Thyroid gland (tissue), 4 donors: ENCODE measurements at regions of chr7 and their contacts with region 1.

Region 1: DNA sequence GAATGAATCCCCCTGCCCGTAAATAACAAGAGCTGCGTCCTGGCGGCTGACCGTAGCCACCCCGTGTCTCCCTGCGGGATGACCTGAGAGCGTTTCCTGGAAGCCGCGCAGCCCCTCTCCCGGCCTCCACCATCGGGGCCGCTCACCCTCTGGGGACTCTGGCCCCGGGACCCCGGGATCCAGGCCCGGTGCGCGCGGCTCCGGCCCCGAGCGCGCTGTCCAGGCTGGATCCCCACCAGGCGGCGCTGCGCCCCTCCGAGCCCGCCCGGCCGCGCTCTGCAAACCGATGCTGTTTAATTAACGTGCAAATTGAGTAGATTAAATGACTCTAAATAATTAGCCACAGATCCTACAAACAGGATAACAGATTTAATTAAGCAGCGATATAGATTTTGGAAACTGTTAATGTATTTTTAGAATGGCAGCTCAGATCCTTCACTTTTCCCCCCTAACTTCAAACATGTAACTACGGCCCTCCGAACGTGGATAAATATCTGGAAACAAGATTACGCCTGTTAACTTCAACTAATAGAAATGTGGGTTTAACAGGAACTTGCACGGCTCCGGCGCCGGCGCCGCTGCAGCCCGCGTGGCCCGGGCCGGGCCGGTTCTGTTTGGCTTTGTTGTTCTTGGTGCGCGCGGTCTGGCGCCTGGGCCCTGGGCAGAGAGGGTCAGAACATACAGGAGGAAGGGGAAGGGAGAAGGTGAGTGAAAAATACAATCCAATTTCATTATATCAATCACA is 7.1 kb upstream of the UNCX start:
- DNase-seq: peak; percentile 11 to 15
- H3K4me3 ChIP-seq: no peak overlapping the region
- H3K27ac ChIP-seq: no peak overlapping the region
- H3K4me1 ChIP-seq: peaks cover 0 to 6% of the 10 kb centered on the region in 2 donors
- H3K27me3 ChIP-seq: peaks cover 67% of the 10 kb centered on the region
- CTCF ChIP-seq: peak in 5 of 6 experiments; percentile 17 to 78 (median 53)
- POLR2A ChIP-seq: no peak

Region 2: DNA sequence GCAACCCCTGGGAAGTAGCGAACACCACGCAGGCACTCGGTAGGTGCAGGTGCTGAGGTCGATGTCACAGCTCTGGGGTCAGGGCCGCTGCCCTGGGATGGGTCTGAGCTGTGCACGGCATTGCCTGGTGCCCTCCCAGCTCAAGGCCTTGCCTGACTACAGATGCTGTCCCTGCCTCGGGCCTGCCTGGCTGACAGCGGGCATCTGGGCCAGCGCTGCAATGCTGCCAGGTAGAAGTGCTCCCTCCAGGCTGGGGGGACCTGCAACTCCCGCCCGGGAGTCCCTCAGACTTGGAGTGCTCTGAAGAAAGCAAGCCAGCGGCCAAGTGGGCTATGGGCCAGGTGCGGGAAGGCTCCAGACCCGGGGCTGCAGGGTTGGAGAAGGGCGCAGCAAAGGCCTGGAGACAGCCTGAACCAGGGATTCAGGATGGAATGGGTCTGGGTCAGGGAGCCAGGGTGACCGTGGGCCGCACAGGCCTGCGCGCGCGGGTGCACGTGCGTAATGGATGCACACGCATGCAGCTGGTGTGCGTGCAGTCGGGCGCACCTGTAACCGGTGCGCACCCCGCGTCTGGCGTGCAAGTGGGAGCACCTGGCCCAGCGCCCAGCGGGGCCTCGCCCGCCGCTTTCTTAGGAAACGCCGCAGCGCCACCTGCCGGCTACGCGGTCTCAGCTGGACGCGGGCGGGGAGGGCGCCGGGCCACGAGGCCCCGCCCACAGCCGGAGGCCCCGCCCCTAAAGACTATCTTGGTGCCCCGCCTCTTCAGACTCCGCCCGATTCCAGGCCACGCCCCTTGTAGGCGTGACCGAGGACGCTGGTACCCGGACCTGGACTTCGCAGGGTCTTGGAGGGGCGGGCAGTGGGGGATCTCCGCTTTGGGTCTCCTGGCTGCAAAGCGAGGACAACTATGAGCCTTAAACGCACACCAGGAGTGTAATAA is 187.0 kb after region 1 on chr7:
- intact Hi-C with region 1: loop called (anchors 10 kb)
- DNase-seq: peak; percentile 82 to 83
- H3K4me3 ChIP-seq: no peak overlapping the region
- H3K27ac ChIP-seq: no peak overlapping the region
- H3K4me1 ChIP-seq: peaks cover 5 to 10% of the 10 kb centered on the region in 2 donors
- H3K27me3 ChIP-seq: no peaks in the 10 kb centered on the region
- CTCF ChIP-seq: peak in 5 of 6 experiments; percentile 26 to 73 (median 53)
- POLR2A ChIP-seq: no peak

Region 3: GRCh38 chr7:1474736-1475135 is 249.1 kb after region 1 on chr7:
- intact Hi-C with region 1: loop called (anchors 5 kb)
- DNase-seq: no peak
- H3K4me3 ChIP-seq: no peak overlapping the region
- H3K27ac ChIP-seq: no peak overlapping the region
- H3K4me1 ChIP-seq: no peaks in the 10 kb centered on the region
- H3K27me3 ChIP-seq: no peaks in the 10 kb centered on the region
- CTCF ChIP-seq: no peak
- POLR2A ChIP-seq: no peak